GM23248 (cell line): ENCODE measurements at regions of chr7 and their contacts with region 1.

Region 1: GRCh38 chr7:138008547-138009349 is 6.9 kb upstream of the CREB3L2 start:
- DNase-seq: peak; percentile 80
- H3K4me3 ChIP-seq: no peak overlapping the region
- H3K27ac ChIP-seq: no peak overlapping the region
- H3K4me1 ChIP-seq: peaks cover 7% of the 10 kb centered on the region
- H3K27me3 ChIP-seq: no peaks in the 10 kb centered on the region

Region 2: DNA sequence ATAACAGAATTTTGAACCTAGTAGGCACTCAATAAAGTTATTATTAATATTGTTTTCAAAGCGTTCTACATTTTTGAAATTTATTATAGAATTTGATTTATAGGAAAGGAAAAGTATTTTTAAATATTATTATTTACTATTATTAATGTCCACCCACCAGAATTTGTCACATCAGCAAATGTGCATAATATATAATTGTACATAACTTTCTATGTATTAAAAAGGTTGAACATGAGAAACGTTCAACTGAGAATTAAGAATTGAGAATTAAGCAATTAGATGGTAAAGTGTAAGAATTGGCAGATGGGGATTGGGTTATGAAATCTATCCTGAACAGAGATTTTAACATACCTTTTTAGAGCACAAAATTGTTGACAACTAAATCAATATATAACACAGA is 795.0 kb before region 1 on chr7:
- in situ Hi-C with region 1: no loop called
- DNase-seq: no peak
- H3K4me3 ChIP-seq: no peak overlapping the region
- H3K27ac ChIP-seq: no peak overlapping the region
- H3K4me1 ChIP-seq: no peaks in the 10 kb centered on the region
- H3K27me3 ChIP-seq: no peaks in the 10 kb centered on the region

Region 3: DNA sequence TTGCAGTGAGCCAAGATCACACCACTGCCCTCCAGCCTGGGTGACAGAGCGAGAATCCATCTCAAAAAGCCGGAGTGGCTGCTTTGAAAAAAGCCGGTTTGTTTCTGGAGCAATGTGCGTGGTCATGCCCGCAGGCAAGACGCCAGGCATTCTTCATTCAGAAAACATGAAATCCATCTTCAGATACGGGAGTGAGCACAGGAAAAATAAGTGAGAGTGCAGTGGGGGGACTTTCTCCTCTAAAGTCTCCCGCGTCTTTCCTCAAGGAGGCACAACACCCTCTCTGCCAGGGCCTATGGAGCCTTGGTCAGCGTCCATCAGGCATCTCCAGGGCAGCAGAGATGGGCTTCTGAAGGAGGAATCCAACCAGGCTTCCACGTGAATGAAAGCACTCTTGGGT is 99.7 kb before region 1 on chr7:
- in situ Hi-C with region 1: loop called (anchors 5 kb)
- DNase-seq: no peak
- H3K4me3 ChIP-seq: no peak overlapping the region
- H3K27ac ChIP-seq: peak overlapping the region; percentile 34; the same call in 1 of the 2 replicates
- H3K4me1 ChIP-seq: no peaks in the 10 kb centered on the region
- H3K27me3 ChIP-seq: no peaks in the 10 kb centered on the region